Activated CD4-positive, alpha-beta memory T cell treated with anti-CD3 and anti-CD28 coated beads for 36 hours (primary cell): ENCODE measurements at regions of chr17 and their contacts with region 1.

Region 1: DNA sequence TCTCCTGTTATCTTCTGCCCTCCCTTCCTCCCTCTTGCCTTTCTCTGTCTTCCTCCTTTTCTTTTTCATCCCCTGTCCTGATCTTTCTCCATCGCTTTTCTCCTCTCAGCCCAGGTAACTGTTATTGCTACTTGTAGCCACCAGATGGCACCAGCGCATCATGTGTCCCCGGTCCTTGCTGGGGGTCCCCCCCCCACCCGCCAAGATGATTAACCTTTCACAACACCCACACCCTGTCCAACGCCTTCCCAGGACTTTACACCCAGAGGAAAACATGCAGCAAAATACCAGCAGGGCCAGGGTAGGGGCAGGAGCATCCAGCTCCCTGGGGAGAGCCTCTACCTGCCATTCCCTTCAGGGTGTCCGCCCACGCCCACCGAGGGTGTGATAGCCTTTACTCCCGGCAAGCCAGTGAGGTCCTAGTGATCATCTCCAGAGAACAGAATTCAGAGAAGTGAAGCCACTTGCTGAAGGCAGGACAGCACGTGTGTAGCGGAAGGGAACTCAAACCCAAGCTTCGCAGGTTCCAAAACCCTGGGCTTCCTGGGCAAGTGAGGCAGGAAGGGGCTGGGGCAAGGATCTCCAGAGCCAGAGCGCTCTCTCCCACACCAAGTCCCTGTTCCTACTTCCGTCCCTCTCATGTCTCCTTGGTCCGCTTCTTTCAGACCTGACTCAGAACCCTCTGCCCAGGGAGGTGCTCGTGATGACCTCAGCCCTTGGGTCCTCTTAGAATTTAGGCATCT is 13.5 kb upstream of the TAC4 start:
- DNase-seq: peak; percentile 59
- H3K4me3 Mint-ChIP-seq: no peak overlapping the region
- H3K27ac Mint-ChIP-seq: no peak overlapping the region
- H3K4me1 Mint-ChIP-seq: peaks cover 4% of the 10 kb centered on the region
- H3K27me3 Mint-ChIP-seq: peaks cover 9% of the 10 kb centered on the region

Region 2: DNA sequence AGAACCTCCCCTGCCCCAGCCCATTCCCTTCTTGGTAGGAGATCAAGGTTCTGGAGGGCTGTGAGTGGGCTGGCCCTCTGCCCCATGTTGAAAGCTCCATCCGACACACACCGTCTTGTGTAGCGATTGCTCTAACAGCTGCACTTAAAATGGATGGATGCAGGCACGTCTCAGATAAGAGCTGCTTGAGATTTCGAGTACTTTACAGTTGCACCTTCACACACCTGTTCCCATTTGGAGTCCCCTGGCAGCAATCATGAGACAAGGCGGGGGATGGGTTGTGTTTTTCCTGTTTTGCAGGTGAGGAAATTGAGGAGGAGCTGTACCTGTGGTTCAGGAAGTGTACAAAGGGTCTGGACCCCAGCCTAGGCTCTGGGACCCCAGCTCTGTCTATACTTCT is 12.1 kb after region 1 on chr17:
- CTCF ChIA-PET with region 1: interaction called, 11 read pairs
- POLR2A ChIA-PET with region 1: no interaction called
- intact Hi-C with region 1: no loop called
- DNase-seq: no peak
- H3K4me3 Mint-ChIP-seq: no peak overlapping the region
- H3K27ac Mint-ChIP-seq: no peak overlapping the region
- H3K4me1 Mint-ChIP-seq: peaks cover 14% of the 10 kb centered on the region
- H3K27me3 Mint-ChIP-seq: peaks cover 4% of the 10 kb centered on the region

Region 3: GRCh38 chr17:49944273-49944890 is 83.1 kb after region 1 on chr17:
- CTCF ChIA-PET with region 1: no interaction called
- POLR2A ChIA-PET with region 1: no interaction called
- intact Hi-C with region 1: loop called (anchors 5 kb)
- DNase-seq: no peak
- H3K4me3 Mint-ChIP-seq: no peak overlapping the region
- H3K27ac Mint-ChIP-seq: no peak overlapping the region
- H3K4me1 Mint-ChIP-seq: no peaks in the 10 kb centered on the region
- H3K27me3 Mint-ChIP-seq: peaks cover 25% of the 10 kb centered on the region